Activated CD4-positive, alpha-beta memory T cell treated with anti-CD3 and anti-CD28 coated beads for 36 hours (primary cell): ENCODE measurements at regions of chr1 and their contacts with region 1.

Region 1: DNA sequence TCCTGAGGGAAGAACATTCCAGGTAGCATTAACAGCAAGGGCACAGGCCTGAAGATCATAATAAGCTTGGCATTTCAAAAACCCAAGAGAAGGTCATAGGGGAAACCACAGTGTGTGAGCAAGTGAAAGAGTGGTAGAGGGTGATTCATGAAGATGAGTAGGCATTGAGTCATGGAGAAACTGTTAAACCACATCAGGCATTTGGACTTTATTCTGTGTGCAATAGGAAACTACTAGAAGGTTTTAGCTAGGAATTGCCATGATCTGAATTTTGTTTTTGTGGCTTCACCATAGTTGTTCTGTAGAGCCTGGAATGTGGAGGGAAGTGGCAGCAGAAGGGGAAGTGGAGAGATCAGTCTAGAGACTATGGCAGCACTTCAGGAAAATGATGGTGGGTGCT is 359.0 kb upstream of the PTBP2 start:
- DNase-seq: no peak
- H3K4me3 Mint-ChIP-seq: no peak overlapping the region
- H3K27ac Mint-ChIP-seq: no peak overlapping the region
- H3K4me1 Mint-ChIP-seq: peaks cover 7% of the 10 kb centered on the region
- H3K27me3 Mint-ChIP-seq: peaks cover 5% of the 10 kb centered on the region

Region 2: GRCh38 chr1:96721416-96722160 is 359.0 kb after region 1 on chr1 and contains the start of gene PTBP2:
- CTCF ChIA-PET with region 1: no interaction called
- POLR2A ChIA-PET with region 1: no interaction called
- intact Hi-C with region 1: loop called (anchors 5 kb)
- DNase-seq: peak; percentile 88
- H3K4me3 Mint-ChIP-seq: peak within 1 kb of the TSS; percentile 89
- H3K27ac Mint-ChIP-seq: peak within 1 kb of the TSS; percentile 80
- H3K4me1 Mint-ChIP-seq: peaks cover 23% of the 10 kb centered on the region
- H3K27me3 Mint-ChIP-seq: no peaks in the 10 kb centered on the region
- total RNA-seq, gene PTBP2: 9.2 to 10.1 TPM